Naive thymus-derived CD4-positive, alpha-beta T cell (primary cell): ENCODE measurements at regions of chr1 and their contacts with region 1.

Region 1: DNA sequence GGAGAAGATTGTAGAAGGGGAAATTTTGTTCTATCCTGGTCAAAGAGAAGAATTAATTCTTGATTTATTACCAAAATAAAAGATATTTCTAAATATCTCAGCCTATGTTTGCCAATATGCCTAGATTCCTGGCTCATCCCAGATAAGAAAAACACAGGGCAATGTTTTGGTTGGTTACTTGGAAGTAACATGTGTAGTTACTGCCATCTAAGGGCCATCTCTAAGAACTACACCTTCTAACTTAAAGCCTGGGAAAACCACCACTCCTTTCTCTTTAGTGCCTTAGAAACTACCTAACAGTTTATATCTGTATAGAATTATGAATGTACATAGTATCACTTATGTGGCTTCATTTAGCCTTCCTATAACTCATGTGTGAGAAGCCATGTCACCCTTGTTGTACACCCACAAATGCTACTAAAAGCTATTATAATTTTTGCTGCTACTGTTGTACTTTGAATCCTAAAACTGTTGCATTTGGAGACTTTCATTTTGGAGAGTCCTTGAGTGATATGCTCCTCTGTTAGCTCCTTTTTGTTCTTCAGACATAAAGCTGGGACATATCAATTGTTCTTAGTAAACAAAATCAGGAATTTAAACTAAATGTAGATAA is 4.5 kb downstream of the AIM2 start:
- DNase-seq: peak in 7 of 9 donors; percentile 8 to 43 (median 32)
- ATAC-seq: peak; percentile 36
- H3K4me3 ChIP-seq: no peak overlapping the region
- H3K4me3 Mint-ChIP-seq: no peak overlapping the region
- H3K27ac ChIP-seq: no peak overlapping the region
- H3K27ac Mint-ChIP-seq: no peak overlapping the region
- H3K4me1 ChIP-seq: peaks cover 15 to 27% of the 10 kb centered on the region in 2 donors
- H3K4me1 Mint-ChIP-seq: peaks cover 8 to 61% (median 16%) of the 10 kb centered on the region in 7 donors
- H3K27me3 ChIP-seq: no peaks in the 10 kb centered on the region
- H3K27me3 Mint-ChIP-seq: peaks cover 0 to 5% (median 0%) of the 10 kb centered on the region in 5 donors

Region 2: DNA sequence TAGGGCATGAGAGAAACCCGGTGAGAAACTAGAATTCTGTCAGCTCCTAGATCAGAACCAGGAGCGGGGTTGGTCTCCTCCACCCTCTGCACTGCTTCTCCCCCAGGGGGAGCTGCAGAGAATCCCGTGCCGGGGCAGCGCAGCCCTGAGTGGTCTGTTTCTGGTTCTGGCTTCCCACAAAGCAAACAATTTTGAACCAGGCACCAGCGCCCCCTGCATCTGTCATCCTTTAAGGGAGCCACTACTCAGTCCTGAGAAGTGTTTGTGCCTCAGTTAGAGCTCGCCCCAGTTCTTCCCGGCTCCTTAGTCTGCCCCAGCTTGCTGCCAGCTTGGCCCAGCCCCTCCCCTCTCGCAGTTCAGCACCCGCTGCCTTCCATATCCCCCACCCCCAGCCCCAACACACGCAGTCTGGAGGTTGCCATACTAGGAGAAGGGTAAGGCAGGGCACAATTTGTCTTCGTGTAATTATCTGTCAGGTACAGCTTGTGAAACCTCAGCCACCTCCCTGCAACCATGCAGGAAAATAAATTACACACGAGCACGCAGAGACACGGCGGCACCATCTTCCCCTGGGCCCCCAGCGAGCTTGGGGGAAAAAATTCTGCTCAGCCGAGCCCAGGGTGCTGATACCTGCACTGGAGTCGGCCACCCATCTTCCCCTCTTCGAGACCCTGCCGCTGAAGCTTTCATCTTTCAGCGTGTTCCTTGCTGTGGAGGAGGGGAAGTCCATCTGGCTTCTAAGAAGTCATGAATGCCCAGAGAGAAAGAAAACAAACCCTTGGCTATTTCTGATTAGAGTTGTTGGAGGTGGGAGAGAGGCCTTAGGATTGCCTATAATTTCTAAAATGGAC is 954.0 kb before region 1 on chr1:
- CTCF ChIA-PET with region 1: no interaction called
- POLR2A ChIA-PET with region 1: no interaction called
- intact Hi-C with region 1: loop called in 1 of 2 experiments (anchors 5 kb)
- DNase-seq: peak in 6 of 9 donors; percentile 30 to 63 (median 46)
- ATAC-seq: peak; percentile 83
- H3K4me3 ChIP-seq: peak overlapping the region; percentile 2
- H3K4me3 Mint-ChIP-seq: peak overlapping the region; percentile 21 to 78 (median 64)
- H3K27ac ChIP-seq: no peak overlapping the region
- H3K27ac Mint-ChIP-seq: no peak overlapping the region
- H3K4me1 ChIP-seq: no peaks in the 10 kb centered on the region
- H3K4me1 Mint-ChIP-seq: peaks cover 7 to 17% (median 15%) of the 10 kb centered on the region in 7 donors
- H3K27me3 ChIP-seq: no peaks in the 10 kb centered on the region
- H3K27me3 Mint-ChIP-seq: peaks cover 58 to 70% (median 63%) of the 10 kb centered on the region in 5 donors

Region 3: GRCh38 chr1:158248118-158248517 is 824.0 kb before region 1 on chr1:
- CTCF ChIA-PET with region 1: no interaction called
- POLR2A ChIA-PET with region 1: no interaction called
- intact Hi-C with region 1: loop called (anchors 2 to 5 kb)
- DNase-seq: peak in 8 of 9 donors; percentile 22 to 62 (median 54)
- ATAC-seq: peak; percentile 85
- H3K4me3 ChIP-seq: no peak overlapping the region
- H3K4me3 Mint-ChIP-seq: peak overlapping the region in 9 of 10 donors; percentile 15 to 71 (median 59)
- H3K27ac ChIP-seq: no peak overlapping the region
- H3K27ac Mint-ChIP-seq: peak overlapping the region in 4 of 9 donors; percentile 2 to 81 (median 28)
- H3K4me1 ChIP-seq: peaks cover 18 to 20% of the 10 kb centered on the region in 2 donors
- H3K4me1 Mint-ChIP-seq: peaks cover 18 to 31% (median 24%) of the 10 kb centered on the region in 7 donors
- H3K27me3 ChIP-seq: peaks cover 0 to 3% of the 10 kb centered on the region in 2 donors
- H3K27me3 Mint-ChIP-seq: peaks cover 42 to 76% (median 58%) of the 10 kb centered on the region in 5 donors

Region 4: GRCh38 chr1:158506369-158506987 is 565.6 kb before region 1 on chr1:
- CTCF ChIA-PET with region 1: interaction called, 5 read pairs
- POLR2A ChIA-PET with region 1: no interaction called
- intact Hi-C with region 1: loop called in 1 of 2 experiments (anchors 1 kb)
- DNase-seq: peak in 3 of 9 donors; percentile 4 to 33 (median 9)
- ATAC-seq: peak; percentile 57
- H3K4me3 ChIP-seq: no peak overlapping the region
- H3K4me3 Mint-ChIP-seq: no peak overlapping the region
- H3K27ac ChIP-seq: no peak overlapping the region
- H3K27ac Mint-ChIP-seq: no peak overlapping the region
- H3K4me1 ChIP-seq: no peaks in the 10 kb centered on the region
- H3K4me1 Mint-ChIP-seq: no peaks in the 10 kb centered on the region
- H3K27me3 ChIP-seq: no peaks in the 10 kb centered on the region
- H3K27me3 Mint-ChIP-seq: peaks cover 31 to 41% (median 34%) of the 10 kb centered on the region in 5 donors

Region 5: DNA sequence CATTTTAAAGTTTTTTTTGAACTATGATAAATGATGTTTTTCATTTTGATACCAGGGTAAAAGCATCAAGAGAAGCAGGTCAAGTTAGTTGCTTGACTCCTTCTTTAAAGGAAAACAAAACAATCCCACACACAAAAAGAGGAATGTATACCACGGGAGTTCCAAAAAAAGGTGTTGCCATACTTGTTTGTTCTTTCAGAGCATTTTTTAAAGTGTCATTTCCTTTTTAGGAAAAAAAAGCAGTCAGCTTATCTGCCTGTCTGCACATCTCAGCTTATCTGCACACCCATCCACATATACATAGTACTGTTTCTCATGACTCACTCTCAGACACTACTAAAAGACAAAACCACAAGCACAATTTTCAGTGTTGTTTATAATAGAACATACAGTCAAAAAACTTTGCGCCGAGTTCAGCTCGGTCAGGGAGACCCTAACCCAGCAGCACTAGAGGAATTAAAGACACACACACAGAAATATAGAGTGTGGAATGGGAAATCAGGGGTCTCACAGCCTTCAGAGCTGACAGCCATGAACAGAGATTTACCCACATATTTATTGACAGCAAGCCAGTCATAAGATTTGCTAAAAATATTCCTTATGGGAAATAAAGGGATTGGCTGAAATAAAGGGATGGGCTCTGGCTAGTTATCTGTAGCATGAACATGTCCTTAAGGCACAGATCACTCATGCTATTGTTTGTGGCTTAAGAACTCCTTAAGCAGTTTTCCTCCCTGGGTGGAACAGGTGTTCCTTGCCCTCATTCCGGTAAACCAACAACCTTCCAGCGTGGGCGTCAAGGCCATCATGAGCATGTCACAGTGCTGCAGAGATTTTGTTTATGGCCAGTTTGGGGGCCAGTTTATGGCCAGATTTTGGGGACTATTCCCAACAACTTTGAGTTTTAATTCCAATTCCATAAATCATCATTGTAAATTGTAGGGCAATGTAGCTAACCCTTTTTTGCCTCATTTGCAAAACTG is 252.3 kb before region 1 on chr1:
- CTCF ChIA-PET with region 1: no interaction called
- POLR2A ChIA-PET with region 1: no interaction called
- intact Hi-C with region 1: loop called in 1 of 2 experiments (anchors 10 kb)
- DNase-seq: no peak
- ATAC-seq: peak; percentile 84
- H3K4me3 ChIP-seq: no peak overlapping the region
- H3K4me3 Mint-ChIP-seq: peak overlapping the region in 2 of 10 donors; percentile 52 to 86
- H3K27ac ChIP-seq: no peak overlapping the region
- H3K27ac Mint-ChIP-seq: peak overlapping the region in 3 of 9 donors; percentile 16 to 88 (median 18)
- H3K4me1 ChIP-seq: peaks cover 0 to 23% of the 10 kb centered on the region in 2 donors
- H3K4me1 Mint-ChIP-seq: peaks cover 0 to 34% (median 9%) of the 10 kb centered on the region in 7 donors
- H3K27me3 ChIP-seq: no peaks in the 10 kb centered on the region
- H3K27me3 Mint-ChIP-seq: peaks cover 0 to 14% (median 11%) of the 10 kb centered on the region in 5 donors

Region 6: GRCh38 chr1:159009704-159010361 is 62.2 kb before region 1 on chr1 and contains the start of gene IFI16:
- CTCF ChIA-PET with region 1: no interaction called
- POLR2A ChIA-PET with region 1: no interaction called
- intact Hi-C with region 1: loop called (anchors 1 to 2 kb)
- DNase-seq: peak in 8 of 9 donors; percentile 56 to 80 (median 71)
- ATAC-seq: peak; percentile 84
- H3K4me3 ChIP-seq: peak within 1 kb of the TSS; percentile 86
- H3K4me3 Mint-ChIP-seq: peak within 1 kb of the TSS; percentile 85 to 98 (median 92)
- H3K27ac ChIP-seq: peak within 1 kb of the TSS; percentile 87
- H3K27ac Mint-ChIP-seq: peak within 1 kb of the TSS; percentile 92 to 99 (median 96)
- H3K4me1 ChIP-seq: peaks cover 28% of the 10 kb centered on the region in 2 donors
- H3K4me1 Mint-ChIP-seq: peaks cover 37 to 64% (median 54%) of the 10 kb centered on the region in 7 donors
- H3K27me3 ChIP-seq: no peaks in the 10 kb centered on the region
- H3K27me3 Mint-ChIP-seq: no peaks in the 10 kb centered on the region
- total RNA-seq, gene IFI16: 42.4 to 307 (median 96.0) TPM